Activated CD4-positive, alpha-beta memory T cell treated with anti-CD3 and anti-CD28 coated beads for 36 hours (primary cell): ENCODE measurements at regions of chr1 and their contacts with region 1.

Region 1: GRCh38 chr1:100543640-100544039 is 5.7 kb downstream of the GPR88 start:
- DNase-seq: peak; percentile 63
- H3K4me3 Mint-ChIP-seq: no peak overlapping the region
- H3K27ac Mint-ChIP-seq: no peak overlapping the region
- H3K4me1 Mint-ChIP-seq: peaks cover 8% of the 10 kb centered on the region
- H3K27me3 Mint-ChIP-seq: peaks cover 20% of the 10 kb centered on the region

Region 2: DNA sequence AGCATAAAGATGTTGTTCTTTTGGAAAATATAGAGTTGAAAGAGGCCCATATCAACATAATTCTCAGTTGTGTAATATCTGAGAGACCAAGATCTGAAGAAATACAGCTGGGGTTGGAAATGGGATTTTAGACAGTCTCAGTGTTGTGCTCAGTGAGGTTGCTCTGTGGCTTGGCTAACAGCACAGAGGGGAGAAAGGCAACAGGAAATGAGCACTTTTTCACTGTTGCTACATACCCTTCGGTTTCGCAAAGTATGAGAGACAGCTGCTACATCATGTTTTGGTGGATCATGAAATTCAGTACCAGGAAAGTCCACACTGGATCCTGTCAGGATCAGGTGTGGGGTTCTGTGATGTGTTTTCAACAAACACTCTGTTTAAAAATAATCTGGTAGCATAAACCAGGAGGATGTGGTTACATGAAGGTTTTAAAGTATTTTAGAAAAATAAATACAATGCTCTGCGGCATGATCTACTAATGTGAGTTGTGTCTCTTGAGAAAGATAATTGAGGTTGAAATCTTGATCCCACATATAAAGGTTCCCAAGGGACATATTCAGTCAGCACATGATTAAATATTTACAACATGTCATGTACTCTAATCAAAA is 12.7 kb before region 1 on chr1:
- CTCF ChIA-PET with region 1: interaction called, 14 read pairs
- POLR2A ChIA-PET with region 1: no interaction called
- intact Hi-C with region 1: loop called (anchors 1 kb)
- DNase-seq: peak; percentile 33
- H3K4me3 Mint-ChIP-seq: no peak overlapping the region
- H3K27ac Mint-ChIP-seq: no peak overlapping the region
- H3K4me1 Mint-ChIP-seq: peaks cover 39% of the 10 kb centered on the region
- H3K27me3 Mint-ChIP-seq: peaks cover 10% of the 10 kb centered on the region

Region 3: GRCh38 chr1:100581096-100581705 is 37.6 kb after region 1 on chr1:
- CTCF ChIA-PET with region 1: interaction called, 3 read pairs
- POLR2A ChIA-PET with region 1: no interaction called
- intact Hi-C with region 1: loop called (anchors 2 kb)
- DNase-seq: peak; percentile 47
- H3K4me3 Mint-ChIP-seq: no peak overlapping the region
- H3K27ac Mint-ChIP-seq: no peak overlapping the region
- H3K4me1 Mint-ChIP-seq: peaks cover 10% of the 10 kb centered on the region
- H3K27me3 Mint-ChIP-seq: peaks cover 2% of the 10 kb centered on the region